Activated CD8-positive, alpha-beta memory T cell treated with anti-CD3 and anti-CD28 coated beads, Interleukin-2, amount 10 ng/mL, durations not matched to agents 7 days and 5 days (primary cell): ENCODE measurements at regions of chr5 and their contacts with region 1.

Region 1: DNA sequence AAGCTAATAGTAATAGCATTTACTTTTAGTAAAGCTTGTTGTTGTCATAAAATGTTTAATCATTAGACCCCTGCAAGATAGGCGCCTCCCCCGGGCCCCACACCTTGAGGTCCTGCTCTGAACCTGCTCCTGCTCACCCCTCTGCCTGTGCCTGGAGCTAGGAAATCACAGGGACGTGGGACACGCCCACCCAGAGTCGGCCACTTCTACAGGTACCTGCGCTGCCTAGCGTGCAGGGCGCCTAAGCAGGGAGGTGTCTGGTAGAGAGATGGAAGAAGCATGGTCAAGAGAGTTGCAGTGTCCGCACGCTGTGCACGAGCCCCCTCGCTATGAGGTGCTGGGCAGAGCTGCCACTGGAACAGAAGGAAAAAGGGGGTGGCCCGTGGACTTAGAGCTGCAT is 52.6 kb downstream of the HINT1 start:
- DNase-seq: no peak
- ATAC-seq: no peak
- H3K4me3 Mint-ChIP-seq: no peak overlapping the region
- H3K27ac Mint-ChIP-seq: no peak overlapping the region
- H3K4me1 Mint-ChIP-seq: peaks cover 4% of the 10 kb centered on the region
- H3K27me3 Mint-ChIP-seq: no peaks in the 10 kb centered on the region

Region 2: GRCh38 chr5:130871346-130872086 is 240.9 kb before region 1 on chr5:
- CTCF ChIA-PET with region 1: interaction called, 12 read pairs
- DNase-seq: peak; percentile 44
- ATAC-seq: peak; percentile 49
- H3K4me3 Mint-ChIP-seq: no peak overlapping the region
- H3K27ac Mint-ChIP-seq: no peak overlapping the region
- H3K4me1 Mint-ChIP-seq: no peaks in the 10 kb centered on the region
- H3K27me3 Mint-ChIP-seq: no peaks in the 10 kb centered on the region

Region 3: DNA sequence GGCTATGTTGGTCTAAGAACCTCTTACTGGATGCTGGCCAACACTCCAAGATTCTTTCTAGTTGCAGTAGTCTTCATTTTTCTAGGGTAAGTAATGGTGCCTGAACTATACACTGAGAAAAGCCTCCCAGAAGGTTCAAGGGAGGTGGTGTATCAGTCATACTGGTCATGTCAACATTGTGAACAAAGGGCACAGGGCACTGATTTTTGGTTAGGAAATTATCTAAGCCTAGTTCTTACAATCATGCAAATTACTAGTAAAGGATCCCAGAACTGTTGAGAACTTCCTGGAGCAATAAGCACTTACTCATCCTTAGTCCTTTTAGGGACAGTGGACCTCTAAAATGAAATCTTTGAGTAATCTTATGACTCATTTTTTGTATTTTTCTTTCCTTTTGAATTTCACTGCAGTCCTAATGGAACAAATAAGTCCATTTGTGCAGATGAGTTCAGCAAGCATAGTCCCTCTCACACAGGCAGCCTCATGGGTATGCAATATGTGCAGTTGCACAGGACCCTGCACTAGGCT is 130.4 kb after region 1 on chr5:
- CTCF ChIA-PET with region 1: no interaction called
- DNase-seq: no peak
- ATAC-seq: peak; percentile 42
- H3K4me3 Mint-ChIP-seq: no peak overlapping the region
- H3K27ac Mint-ChIP-seq: no peak overlapping the region
- H3K4me1 Mint-ChIP-seq: peaks cover 7% of the 10 kb centered on the region
- H3K27me3 Mint-ChIP-seq: no peaks in the 10 kb centered on the region